ENCODE measurements at regions of chr3 and their contacts with region 1.

Region 1: DNA sequence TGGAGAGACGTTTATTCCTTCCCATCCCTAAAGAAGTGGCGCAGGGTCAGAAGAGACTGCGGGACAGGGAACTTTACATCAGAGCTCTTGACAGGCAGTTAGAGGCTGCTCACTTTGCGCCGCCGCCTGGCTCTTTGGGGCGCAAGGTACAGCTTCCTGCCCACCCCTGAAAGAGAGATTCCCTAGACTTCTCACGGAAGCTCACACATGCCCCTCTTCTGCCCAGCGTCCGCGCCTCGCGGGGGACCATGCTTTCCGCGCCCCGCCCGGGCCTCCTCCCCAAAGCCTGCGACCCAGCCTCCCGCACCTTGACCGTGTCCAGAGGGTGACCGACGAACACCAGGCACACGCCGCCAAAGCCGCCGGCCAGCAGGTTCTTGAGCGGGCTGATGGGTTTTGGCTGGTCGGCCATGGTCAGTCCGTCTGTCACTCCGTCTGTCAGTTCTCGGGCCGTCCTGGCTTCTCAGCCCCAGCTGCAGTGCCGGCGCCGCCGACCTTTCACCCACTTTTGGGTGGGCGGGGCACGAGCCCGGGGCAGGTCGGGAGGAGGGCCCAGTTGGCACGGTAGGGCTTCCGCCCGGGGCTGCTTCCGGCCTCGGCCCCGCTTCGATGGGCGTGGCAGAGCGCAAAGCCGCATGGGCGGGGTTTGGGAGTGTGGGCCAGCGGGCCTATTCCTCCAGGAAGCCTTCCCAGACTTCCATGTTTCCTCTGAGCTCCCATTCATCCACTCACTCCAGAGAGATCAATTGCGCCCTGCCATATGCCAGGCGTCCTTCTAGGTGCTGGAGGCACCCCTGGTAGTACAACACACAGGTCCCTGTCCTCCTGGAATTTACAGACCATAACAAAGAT is at the start of gene SLC25A20:
- DNase-seq: peak; percentile 95
- H3K4me3 ChIP-seq: peak within 1 kb of the TSS; percentile 68 to 89 (median 72)
- H3K27ac ChIP-seq: peak within 1 kb of the TSS; percentile 74 to 90 (median 84)
- H3K4me1 ChIP-seq: peaks cover 0 to 20% (median 10%) of the 10 kb centered on the region in 4 donors
- H3K27me3 ChIP-seq: no peaks in the 10 kb centered on the region
- CTCF ChIP-seq: no peak
- EP300 ChIP-seq: peak in 1 of 4 donors; percentile 53
- POLR2A ChIP-seq: no peak
- total RNA-seq, gene SLC25A20: 18.2 to 29.1 (median 20.8) TPM

Region 2: GRCh38 chr3:48765376-48765775 is 133.2 kb before region 1 on chr3:
- intact Hi-C with region 1: no loop called
- DNase-seq: no peak
- H3K4me3 ChIP-seq: no peak overlapping the region
- H3K27ac ChIP-seq: no peak overlapping the region
- H3K4me1 ChIP-seq: no peaks in the 10 kb centered on the region
- H3K27me3 ChIP-seq: no peaks in the 10 kb centered on the region
- CTCF ChIP-seq: no peak
- EP300 ChIP-seq: no peak
- POLR2A ChIP-seq: no peak

Region 3: DNA sequence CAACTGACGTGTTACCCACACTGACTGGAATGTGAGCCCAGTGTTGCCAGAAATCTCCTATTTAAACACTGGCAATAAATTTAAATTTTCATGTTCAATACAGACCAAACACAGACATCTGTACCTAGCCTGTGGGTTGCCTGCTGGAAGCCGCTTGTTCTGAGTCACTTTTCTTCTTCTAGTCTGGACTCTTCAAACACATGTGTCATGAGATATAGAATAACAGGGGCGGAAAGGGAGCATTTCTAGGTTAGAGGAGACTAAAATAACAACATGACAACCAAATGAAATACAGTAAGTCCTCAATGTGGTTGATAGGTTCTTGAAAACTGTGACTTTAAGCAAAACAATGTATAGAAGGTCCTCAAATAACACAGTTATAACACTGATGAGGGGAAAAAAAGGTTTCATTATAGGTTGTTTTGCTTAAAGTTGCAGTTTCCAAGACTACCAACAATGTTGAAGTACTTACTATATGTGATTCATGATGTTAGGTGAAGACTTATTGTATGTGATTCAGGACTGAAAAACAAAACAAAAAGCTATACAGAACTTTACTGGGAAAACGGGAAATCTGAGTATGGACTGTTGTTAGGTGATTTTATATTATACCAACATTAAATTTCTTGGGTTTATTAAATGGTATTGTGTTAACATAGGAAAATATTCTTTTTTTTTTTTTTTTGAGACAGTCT is 114.0 kb before region 1 on chr3:
- intact Hi-C with region 1: no loop called
- DNase-seq: no peak
- H3K4me3 ChIP-seq: no peak overlapping the region
- H3K27ac ChIP-seq: no peak overlapping the region
- H3K4me1 ChIP-seq: no peaks in the 10 kb centered on the region
- H3K27me3 ChIP-seq: no peaks in the 10 kb centered on the region
- CTCF ChIP-seq: no peak
- EP300 ChIP-seq: no peak
- POLR2A ChIP-seq: no peak

Region 4: DNA sequence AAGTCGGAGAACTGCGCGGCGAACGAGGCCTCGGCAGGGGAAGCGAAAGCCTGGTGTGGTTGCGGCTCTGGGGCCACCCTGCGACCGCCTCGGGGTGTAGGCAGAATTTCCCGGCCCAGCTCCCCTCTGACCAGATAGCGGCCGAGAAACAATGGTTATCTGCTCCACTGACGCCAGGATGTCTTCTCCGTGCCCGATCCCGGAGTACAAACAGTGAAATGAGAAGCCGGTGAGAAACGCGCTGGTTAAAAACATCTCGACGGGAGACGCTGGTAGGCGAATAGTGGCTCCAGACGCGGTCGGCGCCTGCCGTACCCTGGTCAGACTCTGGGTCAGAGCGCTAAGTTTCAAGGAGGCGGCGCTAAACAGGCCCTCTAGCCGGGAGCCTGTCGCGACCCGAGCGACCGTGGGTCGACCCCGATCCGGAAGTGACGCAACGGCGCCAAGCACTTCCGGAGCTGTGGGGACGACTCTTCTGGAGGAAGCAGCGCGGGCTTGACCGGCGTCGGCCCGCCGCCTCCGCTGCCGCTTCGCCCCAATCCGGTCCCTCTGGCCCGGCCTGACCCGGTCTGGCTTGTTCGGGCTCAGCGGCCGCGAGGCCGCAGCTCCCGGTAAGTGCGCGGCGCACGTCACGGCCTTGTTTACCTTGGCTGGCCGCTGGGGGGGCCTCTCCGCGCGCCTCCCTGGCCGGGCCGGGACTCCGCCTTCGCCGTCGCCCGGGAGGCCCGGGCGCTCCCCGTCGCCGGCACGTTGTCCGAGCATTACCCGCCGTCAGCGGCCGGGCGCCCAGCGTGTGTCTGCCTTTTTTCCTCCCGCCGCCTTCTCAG is 20.0 kb after region 1 on chr3 and contains the start of gene ARIH2:
- intact Hi-C with region 1: loop called (anchors 2 kb)
- DNase-seq: peak; percentile 96
- H3K4me3 ChIP-seq: peak within 1 kb of the TSS; percentile 89 to 91 (median 90)
- H3K27ac ChIP-seq: peak within 1 kb of the TSS; percentile 97 to 98 (median 98)
- H3K4me1 ChIP-seq: peaks cover 0 to 33% (median 28%) of the 10 kb centered on the region in 4 donors
- H3K27me3 ChIP-seq: no peaks in the 10 kb centered on the region
- CTCF ChIP-seq: no peak
- EP300 ChIP-seq: peak in 1 of 4 donors; percentile 12
- POLR2A ChIP-seq: peak; percentile 75 to 80
- total RNA-seq, gene ARIH2: 94.9 to 165 (median 116) TPM